ENCODE measurements at regions of chr14 and their contacts with region 1.

Region 1: DNA sequence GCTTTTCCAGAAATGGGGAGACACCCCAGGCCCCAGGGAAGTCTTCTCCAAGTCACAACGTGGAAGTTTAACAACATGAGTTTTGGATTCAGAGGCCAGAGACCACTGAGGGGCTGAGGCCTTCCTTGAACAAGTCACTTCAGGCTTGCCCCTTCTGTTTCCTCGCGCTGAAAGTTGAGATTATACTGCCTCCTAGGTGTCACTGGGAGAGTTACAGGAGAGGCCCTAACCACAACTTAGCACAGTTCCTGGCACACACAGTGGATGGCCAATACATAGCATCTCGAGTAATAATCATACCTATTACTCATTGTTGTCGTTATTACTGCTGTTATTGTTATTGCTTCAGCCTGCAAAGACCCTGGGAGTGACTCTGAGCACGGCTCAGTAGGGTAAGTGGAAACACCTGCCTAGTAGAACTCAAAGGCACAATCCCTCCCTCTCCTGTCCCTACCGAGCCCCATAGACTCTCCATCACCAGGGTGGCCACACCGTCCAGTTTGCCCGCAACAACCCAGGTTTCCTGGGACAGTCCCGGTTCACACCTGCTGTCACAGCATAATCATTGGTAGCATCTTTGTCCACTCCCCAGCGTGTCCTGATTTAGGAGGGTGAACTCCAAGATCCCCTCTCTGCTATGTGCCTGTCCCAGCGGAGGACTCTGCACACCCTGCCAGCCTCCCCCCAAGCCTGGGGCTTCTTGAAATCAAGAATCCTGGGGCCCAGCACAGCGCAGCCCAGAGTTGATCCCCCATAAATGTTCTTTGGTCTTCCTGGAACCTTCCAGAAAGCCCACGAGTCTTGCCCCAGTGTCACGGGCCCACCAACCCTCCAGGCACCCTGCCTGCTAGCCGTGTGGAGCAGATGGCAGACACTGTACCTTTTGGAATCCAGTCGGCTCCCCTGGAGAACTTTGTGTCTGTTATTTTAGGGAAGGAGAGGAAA is 85.0 kb downstream of the SYNE3 start:
- DNase-seq: peak in 1 of 2 donors; percentile 12
- H3K4me3 ChIP-seq: no peak overlapping the region
- H3K27ac ChIP-seq: peak overlapping the region in 1 of 3 donors; percentile 12
- H3K4me1 ChIP-seq: no peaks in the 10 kb centered on the region
- H3K27me3 ChIP-seq: no peaks in the 10 kb centered on the region
- CTCF ChIP-seq: peak; percentile 12 to 53 (median 38)
- POLR2A ChIP-seq: no peak

Region 2: GRCh38 chr14:94689218-94689984 is 742.1 kb before region 1 on chr14:
- intact Hi-C with region 1: loop called (anchors 5 kb)
- DNase-seq: peak; percentile 53 to 57
- H3K4me3 ChIP-seq: no peak overlapping the region
- H3K27ac ChIP-seq: no peak overlapping the region
- H3K4me1 ChIP-seq: peaks cover 0 to 5% of the 10 kb centered on the region in 2 donors
- H3K27me3 ChIP-seq: no peaks in the 10 kb centered on the region
- CTCF ChIP-seq: peak; percentile 71 to 98 (median 88)
- POLR2A ChIP-seq: no peak

Region 3: DNA sequence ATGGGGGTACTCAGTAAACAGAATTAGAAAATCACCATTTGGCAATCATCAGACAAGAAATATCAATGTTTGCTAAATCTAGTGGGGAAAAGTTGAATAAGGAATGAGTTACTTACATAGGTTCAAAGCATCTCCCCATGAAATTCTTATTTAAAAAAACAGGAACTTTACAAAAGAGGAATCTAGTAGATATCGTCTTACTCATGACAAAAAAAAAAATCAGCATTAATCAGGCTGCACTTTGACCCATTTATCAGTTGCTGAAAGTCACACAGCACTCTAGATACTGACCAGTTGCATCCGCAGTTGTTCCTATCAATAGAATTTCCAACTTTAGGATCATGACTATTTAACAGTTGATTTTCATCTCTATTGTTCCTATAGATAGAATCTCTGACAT is 268.3 kb before region 1 on chr14:
- intact Hi-C with region 1: loop called (anchors 10 kb)
- DNase-seq: no peak
- H3K4me3 ChIP-seq: no peak overlapping the region
- H3K27ac ChIP-seq: no peak overlapping the region
- H3K4me1 ChIP-seq: peaks cover 5 to 6% of the 10 kb centered on the region in 2 donors
- H3K27me3 ChIP-seq: no peaks in the 10 kb centered on the region
- CTCF ChIP-seq: no peak
- POLR2A ChIP-seq: no peak

Region 4: GRCh38 chr14:95365401-95365800 is 66.1 kb before region 1 on chr14:
- intact Hi-C with region 1: no loop called
- DNase-seq: no peak
- H3K4me3 ChIP-seq: no peak overlapping the region
- H3K27ac ChIP-seq: no peak overlapping the region
- H3K4me1 ChIP-seq: peaks cover 11 to 12% of the 10 kb centered on the region in 2 donors
- H3K27me3 ChIP-seq: no peaks in the 10 kb centered on the region
- CTCF ChIP-seq: no peak
- POLR2A ChIP-seq: no peak

Measured in thyroid gland (tissue), 4 donors.